ENCODE measurements at regions of chr13 and their contacts with region 1.

Region 1: GRCh38 chr13:48037346-48038173 is at the start of gene NUDT15:
- DNase-seq: peak; percentile 90 to 100 (median 96)
- ATAC-seq: peak; percentile 90 to 96 (median 94)
- H3K4me3 ChIP-seq: peak within 1 kb of the TSS; percentile 59 to 90
- H3K4me3 Mint-ChIP-seq: peak within 1 kb of the TSS; percentile 87 to 94 (median 91)
- H3K27ac ChIP-seq: peak within 1 kb of the TSS; percentile 98
- H3K27ac Mint-ChIP-seq: peak within 1 kb of the TSS; percentile 94 to 99
- H3K4me1 ChIP-seq: peaks cover 8 to 14% of the 10 kb centered on the region in 2 experiments
- H3K4me1 Mint-ChIP-seq: peaks cover 28 to 37% (median 34%) of the 10 kb centered on the region in 3 donors
- H3K27me3 ChIP-seq: no peaks in the 10 kb centered on the region
- H3K27me3 Mint-ChIP-seq: no peaks in the 10 kb centered on the region
- total RNA-seq, gene NUDT15: 4.9 to 10.4 (median 5.6) TPM

Region 2: DNA sequence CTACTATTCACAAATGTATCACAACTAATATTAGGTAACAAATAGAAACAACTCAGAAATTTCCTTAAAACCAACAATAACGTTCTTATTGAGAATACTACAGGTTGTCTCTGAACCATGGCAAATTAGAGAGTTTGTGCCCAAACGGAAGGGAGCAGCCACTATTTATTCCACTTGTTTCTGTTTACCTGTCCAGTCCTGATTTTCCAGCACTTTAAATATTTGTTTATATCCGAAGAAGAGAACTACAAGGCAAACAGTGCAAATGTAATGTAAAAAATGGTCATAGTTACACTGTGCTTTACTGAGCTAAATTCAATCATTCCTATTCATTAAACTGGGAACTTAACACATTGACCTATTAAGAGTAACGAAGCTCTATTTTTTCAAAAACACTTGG is 45.7 kb before region 1 on chr13:
- CTCF ChIA-PET with region 1: interaction called in 1 of 2 experiments, 4 read pairs
- POLR2A ChIA-PET with region 1: interaction called in 1 of 2 experiments, 14 read pairs
- DNase-seq: no peak
- ATAC-seq: no peak
- H3K4me3 ChIP-seq: no peak overlapping the region
- H3K4me3 Mint-ChIP-seq: no peak overlapping the region
- H3K27ac ChIP-seq: no peak overlapping the region
- H3K27ac Mint-ChIP-seq: no peak overlapping the region
- H3K4me1 ChIP-seq: no peaks in the 10 kb centered on the region
- H3K4me1 Mint-ChIP-seq: peaks cover 7 to 20% (median 9%) of the 10 kb centered on the region in 3 donors
- H3K27me3 ChIP-seq: no peaks in the 10 kb centered on the region
- H3K27me3 Mint-ChIP-seq: no peaks in the 10 kb centered on the region

Region 3: GRCh38 chr13:48000778-48001628 is 36.6 kb before region 1 on chr13 and contains the start of gene SUCLA2:
- CTCF ChIA-PET with region 1: interaction called in 1 of 2 experiments, 14 read pairs
- POLR2A ChIA-PET with region 1: no interaction called
- DNase-seq: peak; percentile 77 to 93 (median 84)
- ATAC-seq: peak; percentile 99 to 100 (median 99)
- H3K4me3 ChIP-seq: peak within 1 kb of the TSS; percentile 97 to 99
- H3K4me3 Mint-ChIP-seq: peak within 1 kb of the TSS; percentile 92 to 95 (median 94)
- H3K27ac ChIP-seq: peak within 1 kb of the TSS; percentile 66
- H3K27ac Mint-ChIP-seq: peak within 1 kb of the TSS; percentile 67 to 89
- H3K4me1 ChIP-seq: peaks cover 13 to 15% of the 10 kb centered on the region in 2 experiments
- H3K4me1 Mint-ChIP-seq: peaks cover 41 to 49% (median 47%) of the 10 kb centered on the region in 3 donors
- H3K27me3 ChIP-seq: no peaks in the 10 kb centered on the region
- H3K27me3 Mint-ChIP-seq: no peaks in the 10 kb centered on the region
- total RNA-seq, gene SUCLA2: 22.7 to 31.2 (median 29.4) TPM

Region 4: DNA sequence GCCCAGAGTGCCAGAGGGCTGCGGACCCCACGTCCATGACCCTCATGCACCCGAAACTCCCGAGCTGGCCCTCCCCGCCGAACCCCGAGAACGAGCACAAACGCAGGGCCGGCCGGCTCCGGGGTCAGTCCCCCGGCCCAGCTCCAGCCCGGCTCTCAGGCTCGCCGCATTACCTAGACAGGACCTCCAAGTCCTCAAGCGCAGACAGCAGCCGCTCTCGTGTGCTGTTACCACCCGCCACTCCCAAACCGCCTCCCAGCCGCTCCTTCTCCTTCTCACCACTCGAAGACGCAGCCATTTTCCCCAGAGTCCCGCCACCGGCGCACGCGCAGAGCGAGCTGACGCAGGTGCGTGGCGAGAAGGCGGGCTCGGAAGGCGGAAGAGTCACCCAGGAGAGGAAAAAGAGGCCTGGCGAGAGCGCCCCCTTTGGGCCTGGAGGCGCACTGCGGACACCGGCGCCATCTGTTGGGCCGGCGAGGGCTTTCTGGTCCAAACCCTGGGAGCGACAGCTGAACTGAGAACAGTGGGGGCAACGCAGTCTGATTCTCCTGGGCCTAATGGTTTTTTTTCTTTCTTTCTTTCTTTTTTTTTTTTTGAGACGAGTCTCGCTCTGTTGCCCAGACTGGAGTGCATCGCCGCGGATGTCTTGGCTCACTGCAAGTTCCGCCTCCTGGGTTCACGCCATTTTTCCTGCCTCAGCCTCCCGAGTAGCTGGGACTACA is 57.4 kb after region 1 on chr13 and contains the start of gene MED4:
- CTCF ChIA-PET with region 1: interaction called, 3 to 27 read pairs
- POLR2A ChIA-PET with region 1: interaction called, 7 to 11 read pairs
- DNase-seq: peak; percentile 91 to 98 (median 95)
- ATAC-seq: peak; percentile 93 to 99 (median 96)
- H3K4me3 ChIP-seq: peak within 1 kb of the TSS; percentile 97 to 99
- H3K4me3 Mint-ChIP-seq: peak within 1 kb of the TSS; percentile 93 to 97 (median 94)
- H3K27ac ChIP-seq: peak within 1 kb of the TSS; percentile 85
- H3K27ac Mint-ChIP-seq: peak within 1 kb of the TSS; percentile 91 to 94
- H3K4me1 ChIP-seq: peaks cover 13 to 22% of the 10 kb centered on the region in 2 experiments
- H3K4me1 Mint-ChIP-seq: peaks cover 39 to 45% (median 45%) of the 10 kb centered on the region in 3 donors
- H3K27me3 ChIP-seq: peaks cover 0 to 3% of the 10 kb centered on the region in 2 experiments
- H3K27me3 Mint-ChIP-seq: peaks cover 0 to 1% of the 10 kb centered on the region in 2 donors
- total RNA-seq, gene MED4: 43.7 to 51.3 (median 45.7) TPM

Measured in T-cell (primary cell).